ENCODE measurements at regions of chr14 and their contacts with region 1.

Region 1: DNA sequence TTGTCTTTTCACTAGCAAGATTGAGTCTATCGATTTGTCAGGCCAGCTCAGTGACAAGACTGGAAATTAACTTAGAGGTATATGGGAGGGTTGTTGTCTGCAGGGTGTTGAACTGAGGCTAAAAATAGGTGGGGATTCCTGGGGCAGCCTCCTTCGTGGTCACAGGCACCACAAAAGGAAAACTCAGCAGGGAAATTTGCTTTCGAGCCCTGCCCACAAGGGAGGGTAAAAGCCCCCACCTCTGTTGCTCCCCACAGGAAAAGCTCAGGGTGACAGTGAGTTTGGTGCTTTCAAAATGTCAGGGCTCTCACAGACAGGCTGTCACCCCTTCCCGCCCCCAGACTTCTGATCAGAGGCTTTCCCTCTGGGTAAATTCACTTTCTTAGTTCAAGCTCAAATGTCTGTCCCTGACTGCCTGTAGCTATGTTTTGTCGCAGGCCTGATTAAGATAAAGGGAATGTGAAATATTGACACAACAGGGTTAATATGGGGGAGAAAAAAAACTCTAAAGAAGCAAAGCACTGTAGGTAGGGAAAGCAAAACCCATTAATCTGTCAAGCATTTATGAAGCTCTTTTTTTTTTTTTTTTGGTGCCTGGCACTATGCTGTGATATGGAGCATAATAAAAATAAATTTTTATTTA is 11.7 kb upstream of the NFKBIA start:
- DNase-seq: no peak
- ATAC-seq: no peak
- H3K4me3 ChIP-seq: no peak overlapping the region
- H3K27ac ChIP-seq: no peak overlapping the region
- H3K4me1 ChIP-seq: no peaks in the 10 kb centered on the region; the same call in 1 of the 2 replicates
- H3K27me3 ChIP-seq: no peaks in the 10 kb centered on the region
- CTCF ChIP-seq: no peak

Region 2: DNA sequence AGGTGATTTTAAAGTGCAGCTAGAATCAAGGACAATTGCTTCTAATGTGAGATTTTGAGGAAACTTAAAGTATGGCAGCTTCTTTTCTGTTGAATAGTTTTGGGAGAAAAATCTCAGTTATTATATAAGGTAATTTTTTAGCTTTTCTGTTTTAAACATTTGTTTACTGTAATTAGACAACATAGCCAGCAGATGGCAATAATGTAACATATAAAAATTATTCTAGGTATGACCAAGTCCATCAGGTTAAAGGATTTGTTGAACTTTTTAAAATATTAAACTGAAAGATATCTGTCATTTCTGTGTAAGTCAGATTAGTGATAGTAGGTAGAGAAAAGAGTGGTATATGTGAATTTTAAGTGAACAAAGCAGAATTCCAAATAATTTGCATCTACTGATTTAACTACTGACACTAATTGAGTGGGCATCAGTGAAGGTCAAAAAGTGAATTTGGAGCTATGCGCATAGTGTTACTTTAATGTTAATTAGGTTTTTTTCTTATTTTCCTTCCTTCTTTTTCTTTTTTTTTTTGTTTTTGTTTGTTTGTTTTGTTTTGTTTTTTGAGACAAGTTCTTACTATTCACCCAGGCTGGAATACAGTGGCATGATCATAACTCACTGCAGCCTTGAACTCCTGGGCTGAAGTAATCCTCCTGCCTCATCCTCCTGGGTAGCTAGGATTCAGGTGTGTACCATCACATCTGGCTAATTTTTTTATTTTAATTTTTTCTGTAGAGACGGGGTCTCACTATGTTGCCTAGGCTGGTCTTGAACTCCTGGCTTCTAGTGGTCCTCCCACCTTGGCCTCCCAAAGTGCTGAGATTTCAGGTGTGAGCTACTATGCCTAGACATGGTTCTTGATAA is 275.3 kb before region 1 on chr14:
- CTCF ChIA-PET with region 1: interaction called, 3 read pairs
- POLR2A ChIA-PET with region 1: no interaction called
- in situ Hi-C with region 1: no loop called
- intact Hi-C with region 1: loop called (anchors 2 kb)
- DNase-seq: no peak
- ATAC-seq: no peak
- H3K4me3 ChIP-seq: no peak overlapping the region
- H3K27ac ChIP-seq: no peak overlapping the region
- H3K4me1 ChIP-seq: no peaks in the 10 kb centered on the region
- H3K27me3 ChIP-seq: no peaks in the 10 kb centered on the region
- CTCF ChIP-seq: peak; percentile 34; the same call in 1 of the 2 replicates

Region 3: GRCh38 chr14:35224615-35225014 is 191.6 kb before region 1 on chr14:
- CTCF ChIA-PET with region 1: interaction called, 7 read pairs
- POLR2A ChIA-PET with region 1: interaction called, 10 read pairs
- in situ Hi-C with region 1: no loop called
- intact Hi-C with region 1: no loop called
- DNase-seq: no peak
- ATAC-seq: no peak
- H3K4me3 ChIP-seq: no peak overlapping the region
- H3K27ac ChIP-seq: no peak overlapping the region
- H3K4me1 ChIP-seq: no peaks in the 10 kb centered on the region
- H3K27me3 ChIP-seq: no peaks in the 10 kb centered on the region
- CTCF ChIP-seq: no peak

Region 4: DNA sequence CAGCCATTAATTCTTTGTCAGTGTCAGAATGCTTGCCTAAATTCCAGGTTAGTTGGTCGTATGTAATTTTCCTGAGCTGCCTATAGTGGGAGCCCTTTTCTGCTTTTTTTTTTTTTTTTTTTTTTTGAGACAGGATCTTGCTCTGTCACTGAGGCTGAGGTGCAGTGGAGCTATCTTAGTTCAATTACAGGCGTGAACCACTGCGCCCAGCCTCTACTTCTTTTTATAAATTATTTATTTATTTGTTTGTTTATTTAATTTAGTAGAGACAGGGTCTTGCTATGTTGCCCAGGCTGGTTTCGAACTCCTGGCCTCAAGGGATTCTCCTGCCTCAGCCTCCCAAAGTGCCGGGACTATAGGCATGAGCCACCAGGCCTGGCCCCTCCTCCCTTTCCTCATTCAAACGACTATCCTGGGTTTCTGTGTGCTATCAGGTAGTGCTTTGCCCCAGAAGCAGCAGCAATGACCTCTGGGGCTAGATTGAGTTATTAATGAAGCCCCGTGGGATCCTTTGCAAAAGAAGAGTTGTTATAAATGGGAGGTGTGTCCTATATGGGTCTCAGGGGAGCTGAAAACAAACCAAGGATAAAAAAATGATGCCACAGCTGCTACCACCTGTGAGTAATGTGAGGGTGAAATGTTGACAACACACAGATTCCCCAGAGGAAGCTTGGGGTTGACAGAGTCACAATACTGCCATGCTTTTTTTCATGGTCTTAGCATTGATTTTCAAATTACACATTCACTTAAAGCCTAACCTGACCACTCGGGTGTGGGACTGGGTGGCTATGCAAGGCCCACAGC is 22.9 kb after region 1 on chr14:
- CTCF ChIA-PET with region 1: interaction called, 10 read pairs
- POLR2A ChIA-PET with region 1: no interaction called
- in situ Hi-C with region 1: no loop called
- intact Hi-C with region 1: no loop called
- DNase-seq: no peak
- ATAC-seq: no peak
- H3K4me3 ChIP-seq: no peak overlapping the region
- H3K27ac ChIP-seq: no peak overlapping the region
- H3K4me1 ChIP-seq: no peaks in the 10 kb centered on the region
- H3K27me3 ChIP-seq: no peaks in the 10 kb centered on the region
- CTCF ChIP-seq: peak; percentile 79

Region 5: GRCh38 chr14:35492569-35493014 is 76.4 kb after region 1 on chr14:
- CTCF ChIA-PET with region 1: no interaction called
- POLR2A ChIA-PET with region 1: no interaction called
- in situ Hi-C with region 1: no loop called
- intact Hi-C with region 1: no loop called
- DNase-seq: no peak
- ATAC-seq: no peak
- H3K4me3 ChIP-seq: no peak overlapping the region
- H3K27ac ChIP-seq: no peak overlapping the region
- H3K4me1 ChIP-seq: no peaks in the 10 kb centered on the region
- H3K27me3 ChIP-seq: no peaks in the 10 kb centered on the region
- CTCF ChIP-seq: no peak

Region 6: GRCh38 chr14:35687335-35687939 is 271.2 kb after region 1 on chr14:
- CTCF ChIA-PET with region 1: interaction called, 6 read pairs
- POLR2A ChIA-PET with region 1: no interaction called
- in situ Hi-C with region 1: no loop called
- intact Hi-C with region 1: loop called (anchors 5 kb)
- DNase-seq: peak; percentile 17
- ATAC-seq: peak; percentile 68; the same call in 1 of the 2 replicates
- H3K4me3 ChIP-seq: no peak overlapping the region
- H3K27ac ChIP-seq: no peak overlapping the region
- H3K4me1 ChIP-seq: no peaks in the 10 kb centered on the region
- H3K27me3 ChIP-seq: no peaks in the 10 kb centered on the region
- CTCF ChIP-seq: peak; percentile 78; the same call in 1 of the 2 replicates

Measured in Panc1 (cell line).